PC-9 (cell line): ENCODE measurements at regions of chr9 and their contacts with region 1.

Region 1: GRCh38 chr9:100352727-100353505 is at the start of gene TEX10:
- DNase-seq: peak; percentile 61 to 90
- H3K4me3 ChIP-seq: peak within 1 kb of the TSS; percentile 90
- H3K27ac ChIP-seq: peak within 1 kb of the TSS; percentile 65
- H3K4me1 ChIP-seq: peaks cover 25% of the 10 kb centered on the region
- H3K27me3 ChIP-seq: no peaks in the 10 kb centered on the region
- CTCF ChIP-seq: no peak
- total RNA-seq, gene TEX10: 21.6 and 29.0 TPM in 2 replicates

Region 2: GRCh38 chr9:100281676-100282387 is 71.1 kb before region 1 on chr9:
- CTCF ChIA-PET with region 1: no interaction called
- POLR2A ChIA-PET with region 1: no interaction called
- intact Hi-C with region 1: no loop called
- DNase-seq: no peak
- H3K4me3 ChIP-seq: no peak overlapping the region
- H3K27ac ChIP-seq: no peak overlapping the region
- H3K4me1 ChIP-seq: no peaks in the 10 kb centered on the region
- H3K27me3 ChIP-seq: no peaks in the 10 kb centered on the region
- CTCF ChIP-seq: no peak

Region 3: DNA sequence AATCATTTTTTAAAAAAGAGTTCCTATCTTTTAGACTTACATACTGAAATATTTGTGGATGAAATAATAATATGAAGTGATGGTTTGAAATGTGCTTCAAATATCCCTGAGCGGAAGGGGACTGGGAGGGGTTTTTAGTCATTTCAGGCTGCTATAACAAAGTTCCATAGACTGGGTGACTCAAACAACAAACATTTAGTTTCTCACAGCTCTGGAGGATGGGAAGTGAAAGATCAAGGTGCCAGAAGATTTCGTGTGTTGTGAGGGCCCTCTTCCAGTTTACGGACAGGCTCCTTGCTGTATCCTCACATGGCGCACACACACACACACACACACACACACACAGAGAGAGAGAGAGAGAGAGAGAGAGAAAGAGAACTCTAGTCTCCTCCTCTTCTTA is 26.9 kb after region 1 on chr9:
- CTCF ChIA-PET with region 1: no interaction called
- POLR2A ChIA-PET with region 1: no interaction called
- intact Hi-C with region 1: loop called (anchors 2 kb)
- DNase-seq: peak in 1 of 2 experiments; percentile 12
- H3K4me3 ChIP-seq: no peak overlapping the region
- H3K27ac ChIP-seq: peak overlapping the region; percentile 53
- H3K4me1 ChIP-seq: peaks cover 9% of the 10 kb centered on the region; the same call in 1 of the 2 replicates
- H3K27me3 ChIP-seq: no peaks in the 10 kb centered on the region
- CTCF ChIP-seq: no peak

Region 4: GRCh38 chr9:100411472-100412283 is 58.8 kb after region 1 on chr9:
- CTCF ChIA-PET with region 1: no interaction called
- POLR2A ChIA-PET with region 1: interaction called, 5 read pairs
- intact Hi-C with region 1: loop called (anchors 1 kb)
- DNase-seq: peak; percentile 81 to 87
- H3K4me3 ChIP-seq: peak overlapping the region; percentile 55
- H3K27ac ChIP-seq: no peak overlapping the region
- H3K4me1 ChIP-seq: no peaks in the 10 kb centered on the region
- H3K27me3 ChIP-seq: no peaks in the 10 kb centered on the region
- CTCF ChIP-seq: no peak

Region 5: DNA sequence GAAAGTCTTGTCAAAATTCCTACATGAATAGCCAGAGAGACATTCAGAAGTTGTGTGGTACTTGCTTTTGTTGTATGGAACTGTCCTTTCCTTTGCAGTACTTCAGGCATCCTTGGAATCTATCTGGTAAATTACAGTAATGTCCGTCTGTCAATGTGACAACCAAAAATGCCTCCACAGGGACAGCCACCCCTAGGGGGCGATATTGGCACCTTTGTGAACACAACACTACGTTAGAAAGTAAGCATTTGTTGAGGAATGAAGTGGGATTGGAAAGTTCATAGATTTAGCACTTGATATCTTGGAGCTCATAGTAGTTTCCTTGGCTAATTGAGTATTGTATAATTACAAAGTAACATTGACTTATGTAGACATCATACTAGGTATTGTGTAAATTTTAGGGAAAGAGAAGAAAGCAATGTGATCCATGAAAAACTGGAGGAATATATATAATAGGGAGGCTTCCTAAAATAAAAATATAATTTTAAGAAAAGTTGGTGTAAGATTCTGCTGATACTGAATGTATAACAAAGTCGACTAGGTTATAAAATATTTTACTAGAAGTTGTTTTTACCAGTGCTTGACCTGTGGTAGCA is 152.7 kb after region 1 on chr9:
- CTCF ChIA-PET with region 1: interaction called, 4 read pairs
- POLR2A ChIA-PET with region 1: no interaction called
- intact Hi-C with region 1: loop called (anchors 10 kb)
- DNase-seq: peak; percentile 60 to 81
- H3K4me3 ChIP-seq: no peak overlapping the region
- H3K27ac ChIP-seq: no peak overlapping the region
- H3K4me1 ChIP-seq: no peaks in the 10 kb centered on the region
- H3K27me3 ChIP-seq: no peaks in the 10 kb centered on the region
- CTCF ChIP-seq: peak; percentile 79

Region 6: GRCh38 chr9:100554935-100555401 is 202.1 kb after region 1 on chr9:
- CTCF ChIA-PET with region 1: no interaction called
- POLR2A ChIA-PET with region 1: interaction called, 11 read pairs
- intact Hi-C with region 1: no loop called
- DNase-seq: no peak
- H3K4me3 ChIP-seq: no peak overlapping the region
- H3K27ac ChIP-seq: no peak overlapping the region
- H3K4me1 ChIP-seq: no peaks in the 10 kb centered on the region
- H3K27me3 ChIP-seq: no peaks in the 10 kb centered on the region
- CTCF ChIP-seq: no peak